ENCODE measurements at regions of chr16 and their contacts with region 1.

Region 1: DNA sequence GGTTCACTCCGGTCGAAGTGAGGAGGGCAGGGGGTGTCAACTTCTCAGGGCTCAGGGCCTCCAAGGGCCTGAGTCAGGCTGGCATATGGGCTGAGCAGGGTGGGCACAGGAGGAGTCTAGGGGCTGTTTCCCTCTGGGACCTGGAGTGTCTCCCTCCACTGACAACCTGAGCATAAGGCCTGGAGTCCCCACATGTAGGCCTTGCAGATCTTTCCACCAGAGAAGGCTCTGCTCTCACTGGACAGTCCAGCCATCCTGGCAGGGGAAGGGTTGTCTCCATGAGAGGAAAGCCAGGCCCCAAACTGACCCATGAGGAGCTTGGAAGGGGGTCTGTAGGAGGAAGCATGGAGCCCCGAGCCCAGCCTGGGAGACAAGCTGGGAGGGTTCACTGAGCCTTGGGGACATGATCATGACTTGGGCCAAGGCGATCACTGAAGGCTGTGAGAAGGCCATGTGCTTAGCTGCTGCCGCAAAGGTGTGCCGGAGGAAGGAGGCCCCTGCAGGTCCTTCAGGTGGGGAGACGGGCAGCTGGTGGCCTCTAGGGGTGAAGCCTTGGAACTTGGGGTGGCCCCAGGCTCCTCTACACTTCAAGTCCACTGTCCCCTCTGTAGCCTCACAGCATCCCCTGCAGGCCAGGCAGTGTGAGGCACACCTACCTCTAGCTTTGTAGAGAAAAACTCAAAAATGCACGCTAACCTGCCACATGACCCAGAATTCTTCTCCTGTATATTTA is 9.9 kb downstream of the CMTM2 start:
- DNase-seq: no peak
- ATAC-seq: peak; percentile 98
- H3K4me3 ChIP-seq: no peak overlapping the region
- H3K27ac ChIP-seq: no peak overlapping the region
- H3K4me1 ChIP-seq: no peaks in the 10 kb centered on the region; the same call in 1 of the 2 replicates
- H3K27me3 ChIP-seq: peaks cover 0 to 4% of the 10 kb centered on the region in 2 experiments; a peak in 1 of 4 replicates
- CTCF ChIP-seq: peak; percentile 89 to 96 (median 91)
- EP300 ChIP-seq: no peak
- POLR2A ChIP-seq: no peak
- RAD21 ChIP-seq: peak; percentile 92

Region 2: GRCh38 chr16:66357153-66357928 is 231.8 kb before region 1 on chr16:
- CTCF ChIA-PET with region 1: interaction called, 6 read pairs
- POLR2A ChIA-PET with region 1: no interaction called
- RAD21 ChIA-PET with region 1: interaction called, 4 read pairs
- SMC1A ChIA-PET with region 1: interaction called, 10 read pairs
- in situ Hi-C with region 1: no loop called
- intact Hi-C with region 1: no loop called
- DNase-seq: no peak
- ATAC-seq: peak; percentile 68
- H3K4me3 ChIP-seq: no peak overlapping the region
- H3K27ac ChIP-seq: no peak overlapping the region
- H3K4me1 ChIP-seq: no peaks in the 10 kb centered on the region
- H3K27me3 ChIP-seq: no peaks in the 10 kb centered on the region; a peak in 2 of 4 replicates
- CTCF ChIP-seq: peak; percentile 50 to 69 (median 56)
- EP300 ChIP-seq: no peak
- POLR2A ChIP-seq: no peak
- RAD21 ChIP-seq: peak; percentile 28; the same call in 1 of the 2 replicates

Region 3: GRCh38 chr16:66474750-66475199 is 114.4 kb before region 1 on chr16:
- CTCF ChIA-PET with region 1: interaction called, 61 read pairs
- POLR2A ChIA-PET with region 1: no interaction called
- RAD21 ChIA-PET with region 1: interaction called, 25 read pairs
- SMC1A ChIA-PET with region 1: interaction called, 19 read pairs
- in situ Hi-C with region 1: no loop called
- intact Hi-C with region 1: loop called (anchors 1 kb)
- DNase-seq: peak; percentile 9
- ATAC-seq: peak; percentile 90
- H3K4me3 ChIP-seq: no peak overlapping the region
- H3K27ac ChIP-seq: no peak overlapping the region
- H3K4me1 ChIP-seq: no peaks in the 10 kb centered on the region
- H3K27me3 ChIP-seq: peaks cover 0 to 3% of the 10 kb centered on the region in 2 experiments; a peak in 1 of 4 replicates
- CTCF ChIP-seq: no peak
- EP300 ChIP-seq: no peak
- POLR2A ChIP-seq: no peak
- RAD21 ChIP-seq: no peak

Region 4: GRCh38 chr16:66521951-66522771 is 67.0 kb before region 1 on chr16:
- CTCF ChIA-PET with region 1: interaction called, 20 read pairs
- POLR2A ChIA-PET with region 1: no interaction called
- RAD21 ChIA-PET with region 1: interaction called, 4 read pairs
- SMC1A ChIA-PET with region 1: interaction called, 6 read pairs
- in situ Hi-C with region 1: no loop called
- intact Hi-C with region 1: no loop called
- DNase-seq: peak; percentile 86
- ATAC-seq: peak; percentile 72
- H3K4me3 ChIP-seq: no peak overlapping the region
- H3K27ac ChIP-seq: peak overlapping the region; percentile 9; the same call in 1 of the 2 replicates
- H3K4me1 ChIP-seq: peaks cover 69% of the 10 kb centered on the region
- H3K27me3 ChIP-seq: no peaks in the 10 kb centered on the region
- CTCF ChIP-seq: no peak
- EP300 ChIP-seq: peak; percentile 66 to 89
- POLR2A ChIP-seq: no peak
- RAD21 ChIP-seq: no peak

Region 5: GRCh38 chr16:66562407-66562806 is 26.7 kb before region 1 on chr16:
- CTCF ChIA-PET with region 1: interaction called, 47 read pairs
- POLR2A ChIA-PET with region 1: interaction called, 3 read pairs
- RAD21 ChIA-PET with region 1: interaction called, 27 read pairs
- SMC1A ChIA-PET with region 1: interaction called, 12 read pairs
- in situ Hi-C with region 1: no loop called
- intact Hi-C with region 1: no loop called
- DNase-seq: no peak
- ATAC-seq: peak; percentile 19; the same call in 1 of the 3 replicates
- H3K4me3 ChIP-seq: no peak overlapping the region
- H3K27ac ChIP-seq: no peak overlapping the region
- H3K4me1 ChIP-seq: no peaks in the 10 kb centered on the region
- H3K27me3 ChIP-seq: no peaks in the 10 kb centered on the region
- CTCF ChIP-seq: no peak; a peak in 1 of 6 replicates
- EP300 ChIP-seq: no peak
- POLR2A ChIP-seq: no peak
- RAD21 ChIP-seq: peak; percentile 32

Region 6: DNA sequence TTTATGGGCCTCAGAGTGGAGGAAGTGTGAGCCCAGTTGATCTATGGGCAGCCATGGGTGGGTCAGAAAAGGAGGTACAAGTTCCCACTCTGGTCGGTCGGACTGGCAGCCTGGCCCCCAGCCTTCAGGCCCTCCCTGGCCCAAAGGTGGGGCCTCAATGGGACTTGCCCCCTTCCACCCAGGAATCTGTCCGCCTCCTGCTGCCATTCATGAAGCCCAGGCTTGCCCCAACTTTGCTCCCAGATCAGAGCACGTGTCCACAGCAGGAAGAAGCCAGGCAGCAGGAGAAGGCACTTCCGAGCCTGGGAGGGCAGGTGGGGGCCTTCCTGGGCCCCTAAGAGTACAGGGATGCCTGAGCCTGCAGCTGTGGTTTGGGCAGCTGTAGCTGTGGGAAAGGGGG is 12.3 kb after region 1 on chr16:
- CTCF ChIA-PET with region 1: interaction called, 24 read pairs
- POLR2A ChIA-PET with region 1: interaction called, 4 read pairs
- RAD21 ChIA-PET with region 1: interaction called, 8 read pairs
- SMC1A ChIA-PET with region 1: interaction called, 10 read pairs
- in situ Hi-C with region 1: no loop called
- intact Hi-C with region 1: no loop called
- DNase-seq: no peak
- ATAC-seq: no peak
- H3K4me3 ChIP-seq: no peak overlapping the region
- H3K27ac ChIP-seq: no peak overlapping the region
- H3K4me1 ChIP-seq: peaks cover 25% of the 10 kb centered on the region
- H3K27me3 ChIP-seq: no peaks in the 10 kb centered on the region
- CTCF ChIP-seq: no peak
- EP300 ChIP-seq: no peak
- POLR2A ChIP-seq: no peak
- RAD21 ChIP-seq: no peak